ENCODE measurements at regions of chr10 and their contacts with region 1.

Region 1: GRCh38 chr10:100046021-100046486 is 35.6 kb downstream of the CPN1 start:
- DNase-seq: peak; percentile 92
- H3K4me3 ChIP-seq: no peak overlapping the region
- H3K27ac ChIP-seq: no peak overlapping the region
- H3K4me1 ChIP-seq: peaks cover 0 to 9% (median 2%) of the 10 kb centered on the region in 4 donors
- H3K27me3 ChIP-seq: no peaks in the 10 kb centered on the region
- CTCF ChIP-seq: peak; percentile 71 to 93 (median 90)
- EP300 ChIP-seq: no peak
- POLR2A ChIP-seq: no peak

Region 2: DNA sequence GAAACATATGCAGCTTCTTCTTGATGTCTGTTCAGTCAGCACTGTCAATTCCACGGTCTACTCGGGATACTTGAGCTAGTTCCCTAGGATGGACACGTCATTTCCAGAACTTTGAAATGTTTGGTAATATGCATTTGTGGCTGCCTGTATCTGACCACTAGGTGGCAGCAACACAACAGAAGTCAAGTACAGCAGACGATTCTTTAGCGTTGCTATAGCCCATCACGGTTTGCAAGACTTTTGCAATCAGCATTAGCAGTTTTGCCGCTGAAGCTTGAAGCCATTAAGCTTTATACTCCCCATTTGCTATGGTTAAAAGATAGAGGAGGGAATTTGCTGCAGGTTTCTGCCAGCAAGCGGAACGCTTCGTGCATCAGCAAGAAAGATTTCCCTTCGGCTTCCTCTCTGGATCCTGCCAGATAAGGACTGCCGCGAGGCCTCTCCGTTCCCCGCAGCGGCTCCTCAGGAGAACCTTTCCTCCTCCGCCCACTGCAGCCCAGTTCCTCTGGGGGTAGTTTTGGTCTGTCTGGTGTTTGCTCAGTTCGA is 200.1 kb before region 1 on chr10:
- intact Hi-C with region 1: loop called (anchors 1 kb)
- DNase-seq: peak; percentile 91
- H3K4me3 ChIP-seq: peak overlapping the region in 3 of 4 donors; percentile 26 to 41 (median 32)
- H3K27ac ChIP-seq: peak overlapping the region in 1 of 4 donors; percentile 60
- H3K4me1 ChIP-seq: peaks cover 0 to 16% (median 4%) of the 10 kb centered on the region in 4 donors
- H3K27me3 ChIP-seq: no peaks in the 10 kb centered on the region
- CTCF ChIP-seq: peak; percentile 88 to 96 (median 90)
- EP300 ChIP-seq: no peak
- POLR2A ChIP-seq: no peak

Region 3: DNA sequence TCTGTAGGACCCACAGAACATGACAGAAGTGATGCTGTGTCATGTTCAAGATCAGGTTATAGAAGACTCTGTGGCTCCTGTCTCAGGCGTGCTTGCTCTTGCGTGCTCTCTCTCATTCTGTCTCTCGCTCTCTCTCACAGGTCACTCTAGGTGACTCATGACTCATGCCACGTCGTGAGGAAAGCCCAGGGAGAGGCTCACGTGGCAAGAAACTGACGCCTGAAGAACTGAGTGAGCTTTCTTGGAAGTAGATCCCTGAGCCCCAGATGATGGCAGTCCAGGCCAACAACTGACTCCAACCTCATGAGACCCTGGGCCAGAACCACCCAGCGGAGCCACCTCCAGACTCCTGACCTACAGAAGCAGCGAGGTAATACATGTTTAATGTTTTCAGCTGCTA is 139.6 kb before region 1 on chr10:
- intact Hi-C with region 1: loop called (anchors 5 kb)
- DNase-seq: peak; percentile 78
- H3K4me3 ChIP-seq: no peak overlapping the region
- H3K27ac ChIP-seq: peak overlapping the region in 1 of 4 donors; percentile 17
- H3K4me1 ChIP-seq: peaks cover 0 to 22% (median 3%) of the 10 kb centered on the region in 4 donors
- H3K27me3 ChIP-seq: no peaks in the 10 kb centered on the region
- CTCF ChIP-seq: no peak
- EP300 ChIP-seq: no peak
- POLR2A ChIP-seq: no peak

Region 4: GRCh38 chr10:99973190-99973589 is 72.9 kb before region 1 on chr10:
- intact Hi-C with region 1: loop called (anchors 5 kb)
- DNase-seq: no peak
- H3K4me3 ChIP-seq: no peak overlapping the region
- H3K27ac ChIP-seq: peak overlapping the region in 1 of 4 donors; percentile 5
- H3K4me1 ChIP-seq: peaks cover 0 to 42% (median 33%) of the 10 kb centered on the region in 4 donors
- H3K27me3 ChIP-seq: no peaks in the 10 kb centered on the region
- CTCF ChIP-seq: peak in 1 of 4 experiments; percentile 20
- EP300 ChIP-seq: no peak
- POLR2A ChIP-seq: no peak

Region 5: GRCh38 chr10:100009793-100010676 is 36.0 kb before region 1 on chr10 and contains the start of gene DNMBP:
- intact Hi-C with region 1: loop called (anchors 2 kb)
- DNase-seq: peak; percentile 91
- H3K4me3 ChIP-seq: peak within 1 kb of the TSS; percentile 62 to 83 (median 74)
- H3K27ac ChIP-seq: peak within 1 kb of the TSS; percentile 82 to 91 (median 85)
- H3K4me1 ChIP-seq: peaks cover 0 to 45% (median 37%) of the 10 kb centered on the region in 4 donors
- H3K27me3 ChIP-seq: no peaks in the 10 kb centered on the region
- CTCF ChIP-seq: peak in 2 of 4 experiments; percentile 44 to 55
- EP300 ChIP-seq: no peak
- POLR2A ChIP-seq: no peak
- total RNA-seq, gene DNMBP: 15.0 to 21.6 (median 16.0) TPM

Measured in sigmoid colon (tissue), 7 donors.